ENCODE measurements at regions of chr1 and their contacts with region 1.

Region 1: GRCh38 chr1:203117611-203118575 is 9.6 kb upstream of the ADORA1 start:
- DNase-seq: peak; percentile 65
- H3K4me3 ChIP-seq: no peak overlapping the region
- H3K27ac ChIP-seq: no peak overlapping the region
- H3K4me1 ChIP-seq: no peaks in the 10 kb centered on the region
- H3K27me3 ChIP-seq: no peaks in the 10 kb centered on the region
- CTCF ChIP-seq: peak; percentile 60

Region 2: GRCh38 chr1:203172128-203173010 is 54.5 kb after region 1 on chr1:
- intact Hi-C with region 1: loop called (anchors 5 kb)
- DNase-seq: peak; percentile 67
- H3K4me3 ChIP-seq: no peak overlapping the region
- H3K27ac ChIP-seq: no peak overlapping the region
- H3K4me1 ChIP-seq: no peaks in the 10 kb centered on the region
- H3K27me3 ChIP-seq: no peaks in the 10 kb centered on the region
- CTCF ChIP-seq: peak; percentile 83

Region 3: GRCh38 chr1:203206129-203206687 is 88.3 kb after region 1 on chr1:
- intact Hi-C with region 1: no loop called
- DNase-seq: no peak
- H3K4me3 ChIP-seq: no peak overlapping the region
- H3K27ac ChIP-seq: no peak overlapping the region
- H3K4me1 ChIP-seq: no peaks in the 10 kb centered on the region
- H3K27me3 ChIP-seq: no peaks in the 10 kb centered on the region
- CTCF ChIP-seq: no peak

Region 4: DNA sequence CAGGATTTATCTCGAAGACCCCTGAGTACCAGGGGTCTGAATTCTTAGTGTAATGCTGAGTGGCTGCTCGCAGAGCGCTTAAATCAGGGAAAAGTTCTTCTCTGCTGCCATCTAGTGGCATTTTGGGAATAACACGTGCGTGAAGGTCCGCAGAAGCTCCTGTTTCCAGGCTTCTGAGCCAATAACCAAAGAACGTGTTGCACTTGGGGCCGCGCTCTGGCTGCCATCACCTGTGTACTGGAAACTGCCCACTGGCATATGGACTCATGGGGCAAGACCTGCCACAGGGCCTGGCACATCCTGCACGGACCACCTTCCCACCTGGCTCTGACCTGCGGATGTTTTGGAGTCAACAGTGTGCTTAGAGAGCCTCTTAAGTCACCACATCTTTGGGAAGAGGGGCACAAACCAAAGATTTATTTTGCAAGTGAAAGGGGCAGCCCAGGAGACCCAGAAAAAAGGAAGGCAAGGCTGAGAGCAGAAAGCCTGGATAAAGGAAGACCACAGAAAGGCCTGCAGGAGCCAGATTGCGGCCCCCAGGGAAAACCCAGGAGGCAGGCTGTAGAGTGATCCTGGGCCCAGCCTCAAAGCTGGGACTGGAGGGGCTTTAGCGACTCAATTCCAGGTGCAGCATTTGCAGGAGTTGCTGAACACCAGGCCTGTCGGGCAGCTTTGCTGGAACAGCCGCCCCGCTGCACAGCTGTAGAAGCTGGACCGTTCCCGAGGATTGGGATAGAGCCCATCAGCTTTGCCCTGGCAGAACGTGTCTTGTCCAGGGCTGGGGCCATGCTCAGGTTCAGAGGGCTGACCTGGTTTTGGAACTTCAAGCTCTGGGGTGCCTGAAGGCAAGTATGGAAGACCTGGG is 98.6 kb after region 1 on chr1:
- intact Hi-C with region 1: loop called (anchors 5 kb)
- DNase-seq: peak; percentile 68
- H3K4me3 ChIP-seq: no peak overlapping the region
- H3K27ac ChIP-seq: no peak overlapping the region
- H3K4me1 ChIP-seq: no peaks in the 10 kb centered on the region
- H3K27me3 ChIP-seq: no peaks in the 10 kb centered on the region
- CTCF ChIP-seq: peak; percentile 63

Measured in colonic mucosa (tissue), 4 donors.